Activated CD8-positive, alpha-beta T cell treated with anti-CD3 and anti-CD28 coated beads for 36 hours (primary cell): ENCODE measurements at regions of chr4 and their contacts with region 1.

Region 1: DNA sequence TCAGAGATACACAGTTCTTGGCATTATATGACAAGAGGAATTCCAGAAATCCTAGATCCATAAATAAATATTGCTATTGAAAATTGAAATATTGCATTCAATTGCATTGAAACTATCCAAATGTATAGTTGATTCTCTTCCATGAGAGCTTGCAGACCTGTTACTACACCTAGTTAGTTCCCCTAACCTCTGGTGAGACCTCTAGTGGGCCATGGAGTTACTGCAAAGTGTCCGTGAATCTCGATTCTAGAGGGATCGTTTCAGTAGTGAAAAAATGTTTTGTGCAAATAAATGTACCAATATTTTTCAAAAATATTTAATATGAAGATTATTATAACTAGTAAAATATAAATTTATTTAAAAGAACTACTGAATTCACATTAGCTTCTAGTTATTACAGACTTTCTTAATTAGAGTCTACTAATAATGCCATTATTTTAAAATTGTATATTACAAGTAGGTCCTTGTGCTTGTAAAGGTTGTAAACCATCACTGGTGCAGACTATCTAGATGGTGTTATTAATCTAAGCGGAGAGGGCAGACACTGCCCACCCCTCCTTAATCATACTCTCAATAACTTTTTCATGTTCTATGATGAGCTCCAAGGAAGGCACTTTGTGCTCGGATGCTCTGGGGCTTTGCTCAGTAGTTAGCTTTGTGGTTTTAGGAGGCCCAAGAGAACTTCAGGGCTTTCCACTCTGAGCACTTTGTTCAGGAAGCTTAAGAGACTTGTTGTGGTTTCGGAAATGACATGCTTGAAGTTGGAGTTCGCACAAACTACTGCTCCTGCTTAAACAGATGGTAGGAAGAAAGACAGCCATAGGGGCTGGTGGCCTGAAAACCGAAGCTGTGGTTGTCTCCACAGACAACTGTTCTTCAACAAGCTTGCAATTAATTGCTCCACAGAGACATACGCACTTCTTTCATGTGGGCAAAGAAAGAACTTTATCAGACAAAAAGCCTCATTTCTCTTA is 42.8 kb downstream of the IL21 start:
- DNase-seq: peak; percentile 84
- ATAC-seq: peak; percentile 69
- H3K4me3 Mint-ChIP-seq: peak overlapping the region; percentile 70
- H3K27ac Mint-ChIP-seq: peak overlapping the region; percentile 91
- H3K4me1 Mint-ChIP-seq: peaks cover 33% of the 10 kb centered on the region
- H3K27me3 Mint-ChIP-seq: peaks cover 6% of the 10 kb centered on the region
- CTCF ChIP-seq: peak; percentile 72

Region 2: DNA sequence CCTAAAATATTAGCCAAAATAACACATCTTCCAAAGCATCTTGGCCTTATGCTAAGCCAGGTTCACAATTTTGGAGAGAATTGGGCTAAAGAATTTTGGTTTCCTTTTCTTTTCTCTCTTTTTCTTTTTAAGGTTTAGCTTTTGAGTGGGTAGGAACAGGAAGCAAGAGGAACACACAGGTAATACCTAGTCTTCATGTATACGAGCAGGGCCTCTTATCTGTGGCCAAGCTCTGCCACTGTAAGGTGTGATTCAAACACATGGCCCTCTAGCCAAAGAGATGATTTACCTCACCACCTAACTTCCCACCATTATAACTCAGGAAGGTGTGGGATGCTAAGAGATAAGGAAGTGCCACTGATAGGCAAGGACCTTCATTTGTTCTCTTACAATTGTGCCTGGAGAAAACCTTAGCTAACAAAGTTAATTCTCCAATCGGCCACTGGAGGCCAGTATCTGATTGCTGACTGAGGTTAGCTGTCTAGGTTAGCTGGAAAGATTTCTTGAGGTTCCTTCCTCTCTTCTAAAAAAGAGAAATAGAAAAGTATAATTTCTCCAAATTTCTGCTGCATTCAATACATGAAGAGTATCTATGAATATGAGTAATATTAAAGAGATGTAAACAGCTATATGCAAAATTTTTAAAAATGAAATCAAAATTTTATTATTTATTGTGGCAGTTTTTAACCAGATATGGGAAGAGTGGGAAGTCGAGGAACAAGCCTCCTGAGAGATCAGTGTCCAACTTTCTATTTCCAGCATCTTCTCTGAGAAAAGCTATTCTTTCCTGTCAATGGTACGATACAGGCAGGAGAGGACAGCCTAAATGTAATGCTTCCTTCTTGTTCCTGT is 677.7 kb before region 1 on chr4:
- CTCF ChIA-PET with region 1: interaction called, 19 read pairs
- POLR2A ChIA-PET with region 1: no interaction called
- intact Hi-C with region 1: no loop called
- DNase-seq: peak; percentile 68
- ATAC-seq: peak; percentile 85
- H3K4me3 Mint-ChIP-seq: no peak overlapping the region
- H3K27ac Mint-ChIP-seq: no peak overlapping the region
- H3K4me1 Mint-ChIP-seq: peaks cover 8% of the 10 kb centered on the region
- H3K27me3 Mint-ChIP-seq: peaks cover 3% of the 10 kb centered on the region
- CTCF ChIP-seq: peak; percentile 83

Region 3: GRCh38 chr4:122326908-122327307 is 251.2 kb before region 1 on chr4:
- CTCF ChIA-PET with region 1: interaction called, 11 read pairs
- POLR2A ChIA-PET with region 1: no interaction called
- intact Hi-C with region 1: no loop called
- DNase-seq: no peak
- ATAC-seq: no peak
- H3K4me3 Mint-ChIP-seq: no peak overlapping the region
- H3K27ac Mint-ChIP-seq: no peak overlapping the region
- H3K4me1 Mint-ChIP-seq: peaks cover 7% of the 10 kb centered on the region
- H3K27me3 Mint-ChIP-seq: no peaks in the 10 kb centered on the region
- CTCF ChIP-seq: no peak

Region 4: DNA sequence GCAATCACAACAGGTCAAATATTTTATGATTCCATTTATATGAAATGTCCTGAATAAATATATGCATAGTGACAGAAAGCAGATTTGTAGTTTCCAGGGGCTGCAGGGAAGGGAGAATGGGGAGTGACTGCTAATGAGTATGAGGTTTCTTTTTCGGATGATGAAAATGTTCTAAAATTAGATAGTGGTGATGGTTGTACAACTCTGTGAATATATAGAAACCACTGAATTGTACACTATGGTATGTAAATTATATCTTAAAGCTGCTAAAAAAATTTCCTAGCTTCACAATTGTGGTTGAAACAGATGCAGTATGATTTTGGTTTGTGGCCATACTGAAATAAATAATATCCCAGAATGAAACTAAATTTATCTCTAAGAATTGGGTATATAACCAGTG is 108.6 kb before region 1 on chr4:
- CTCF ChIA-PET with region 1: interaction called, 11 read pairs
- POLR2A ChIA-PET with region 1: no interaction called
- intact Hi-C with region 1: no loop called
- DNase-seq: no peak
- ATAC-seq: no peak
- H3K4me3 Mint-ChIP-seq: no peak overlapping the region
- H3K27ac Mint-ChIP-seq: no peak overlapping the region
- H3K4me1 Mint-ChIP-seq: peaks cover 8% of the 10 kb centered on the region
- H3K27me3 Mint-ChIP-seq: peaks cover 13% of the 10 kb centered on the region
- CTCF ChIP-seq: no peak

Region 5: GRCh38 chr4:122548452-122548851 is 29.6 kb before region 1 on chr4:
- CTCF ChIA-PET with region 1: interaction called, 14 read pairs
- POLR2A ChIA-PET with region 1: no interaction called
- intact Hi-C with region 1: loop called (anchors 5 kb)
- DNase-seq: no peak
- ATAC-seq: peak; percentile 78
- H3K4me3 Mint-ChIP-seq: peak overlapping the region; percentile 12
- H3K27ac Mint-ChIP-seq: no peak overlapping the region
- H3K4me1 Mint-ChIP-seq: peaks cover 39% of the 10 kb centered on the region
- H3K27me3 Mint-ChIP-seq: no peaks in the 10 kb centered on the region
- CTCF ChIP-seq: no peak

Region 6: DNA sequence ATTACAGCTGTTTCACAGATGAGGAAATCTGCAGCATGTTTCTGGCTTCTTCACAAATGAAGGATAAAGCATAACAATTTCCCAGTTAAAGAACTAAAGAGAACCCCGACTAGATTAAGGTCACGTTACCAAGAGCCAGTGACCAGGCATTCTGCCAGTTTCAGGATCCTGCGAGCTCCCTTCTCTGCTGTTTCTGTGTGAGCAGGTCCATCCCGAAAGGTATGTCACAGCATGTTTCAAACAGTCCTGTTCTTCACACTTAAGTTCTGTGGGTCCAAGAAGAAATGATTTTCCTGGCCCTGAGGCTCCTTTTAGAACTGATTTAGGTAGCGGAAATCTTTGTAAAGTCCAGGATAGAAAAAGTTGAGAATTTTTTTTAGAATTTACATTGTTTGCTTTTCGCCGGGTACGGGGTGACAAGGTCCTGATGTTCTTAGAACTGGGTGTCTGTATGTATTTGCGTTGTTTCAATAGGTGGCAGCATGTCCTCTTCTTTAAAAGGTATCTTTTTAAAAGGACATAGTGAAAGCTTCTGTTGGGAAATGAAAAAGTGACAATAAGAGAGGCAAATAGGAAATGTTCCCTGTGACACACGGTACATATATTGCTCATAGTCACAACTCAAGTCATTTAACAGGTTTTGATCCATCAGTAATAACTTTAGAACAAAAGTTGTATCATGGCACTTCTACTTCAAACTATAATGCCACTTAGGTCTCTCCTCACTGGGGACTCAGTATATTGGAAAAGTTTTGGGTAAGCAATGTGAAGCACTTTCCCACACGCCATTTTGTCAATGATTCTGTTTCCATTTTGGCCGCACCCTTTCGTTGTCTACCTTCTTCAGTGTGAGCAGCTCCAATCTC is 24.4 kb after region 1 on chr4:
- CTCF ChIA-PET with region 1: interaction called, 17 read pairs
- POLR2A ChIA-PET with region 1: interaction called, 3 read pairs
- intact Hi-C with region 1: no loop called
- DNase-seq: no peak
- ATAC-seq: peak; percentile 69
- H3K4me3 Mint-ChIP-seq: no peak overlapping the region
- H3K27ac Mint-ChIP-seq: no peak overlapping the region
- H3K4me1 Mint-ChIP-seq: no peaks in the 10 kb centered on the region
- H3K27me3 Mint-ChIP-seq: peaks cover 15% of the 10 kb centered on the region
- CTCF ChIP-seq: peak; percentile 42